Dorsolateral prefrontal cortex (tissue), 120 donors: ENCODE measurements at regions of chr6 and their contacts with region 1.

Region 1: GRCh38 chr6:34196126-34196830 is 40.4 kb upstream of the HMGA1 start:
- DNase-seq: peak; percentile 78 to 92 (median 85)
- H3K4me3 ChIP-seq: peak overlapping the region; percentile 47 to 85 (median 64)
- H3K27ac ChIP-seq: peak overlapping the region in 7 of 59 donors; percentile 4 to 75 (median 70)
- H3K27me3 ChIP-seq: no peaks in the 10 kb centered on the region
- CTCF ChIP-seq: peak; percentile 78 to 100 (median 97)

Region 2: GRCh38 chr6:34223956-34224940 is 28.0 kb after region 1 on chr6:
- intact Hi-C with region 1: loop called in 1 of 2 experiments (anchors 2 kb)
- DNase-seq: peak; percentile 81 to 95 (median 88)
- H3K4me3 ChIP-seq: peak overlapping the region; percentile 47 to 98 (median 72)
- H3K27ac ChIP-seq: peak overlapping the region; percentile 12 to 97 (median 93)
- H3K27me3 ChIP-seq: no peaks in the 10 kb centered on the region
- CTCF ChIP-seq: peak in 6 of 56 donors; percentile 5 to 35 (median 12)

Region 3: DNA sequence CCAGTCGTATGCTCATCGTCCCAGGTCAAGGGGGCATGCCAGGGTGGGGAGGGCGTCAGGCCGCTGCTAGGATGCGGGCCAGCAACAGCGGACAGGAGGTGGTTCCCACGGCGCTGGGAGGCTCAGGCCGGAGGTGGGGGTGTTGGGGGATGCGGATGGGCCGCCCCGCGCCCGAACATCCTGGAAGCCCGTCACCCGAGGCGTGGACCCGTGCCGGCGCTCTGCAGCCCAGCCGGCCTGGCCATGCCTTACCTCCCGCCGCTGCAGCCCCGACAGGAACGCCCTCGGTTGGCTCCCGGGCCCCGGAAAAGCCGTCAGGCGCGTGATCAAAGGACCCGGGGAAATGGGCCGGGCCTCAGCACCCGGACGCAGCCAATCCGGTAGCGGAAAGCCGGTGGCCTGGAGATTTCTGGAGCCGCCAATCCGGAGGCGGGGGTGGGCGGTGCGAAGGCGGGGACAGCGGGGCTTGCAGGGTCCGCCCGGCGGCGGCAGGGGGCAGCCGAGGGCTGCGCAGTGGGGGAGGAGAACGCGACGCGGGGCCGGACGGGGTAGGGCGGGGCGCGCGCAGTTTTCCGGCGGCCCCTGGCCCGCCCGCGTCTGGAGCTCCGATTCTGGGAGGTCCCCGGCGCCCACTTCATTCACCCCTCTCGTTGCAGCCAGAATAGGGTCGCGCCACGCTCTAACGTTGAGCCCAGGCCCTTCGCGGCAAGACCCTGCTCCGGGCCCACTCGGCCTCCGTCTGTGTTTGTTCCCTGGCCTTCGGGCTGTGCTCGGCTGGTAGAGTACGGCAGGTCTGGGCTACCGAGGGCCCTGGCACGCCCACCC is 52.7 kb after region 1 on chr6 and contains the start of gene SMIM29:
- intact Hi-C with region 1: loop called (anchors 1 to 2 kb)
- DNase-seq: peak; percentile 94 to 99 (median 97)
- H3K4me3 ChIP-seq: peak within 1 kb of the TSS; percentile 66 to 100 (median 93)
- H3K27ac ChIP-seq: peak within 1 kb of the TSS; percentile 75 to 99 (median 96)
- H3K27me3 ChIP-seq: no peaks in the 10 kb centered on the region
- CTCF ChIP-seq: peak; percentile 64 to 99 (median 94)
- total RNA-seq, gene SMIM29: 43.8 to 108 (median 67.5) TPM

Region 4: GRCh38 chr6:34324738-34325444 is 128.6 kb after region 1 on chr6:
- intact Hi-C with region 1: no loop called
- DNase-seq: peak in 1 of 10 donors; percentile 34
- H3K4me3 ChIP-seq: no peak overlapping the region
- H3K27ac ChIP-seq: peak overlapping the region in 28 of 59 donors; percentile 1 to 59 (median 28)
- H3K27me3 ChIP-seq: no peaks in the 10 kb centered on the region
- CTCF ChIP-seq: no peak

Region 5: DNA sequence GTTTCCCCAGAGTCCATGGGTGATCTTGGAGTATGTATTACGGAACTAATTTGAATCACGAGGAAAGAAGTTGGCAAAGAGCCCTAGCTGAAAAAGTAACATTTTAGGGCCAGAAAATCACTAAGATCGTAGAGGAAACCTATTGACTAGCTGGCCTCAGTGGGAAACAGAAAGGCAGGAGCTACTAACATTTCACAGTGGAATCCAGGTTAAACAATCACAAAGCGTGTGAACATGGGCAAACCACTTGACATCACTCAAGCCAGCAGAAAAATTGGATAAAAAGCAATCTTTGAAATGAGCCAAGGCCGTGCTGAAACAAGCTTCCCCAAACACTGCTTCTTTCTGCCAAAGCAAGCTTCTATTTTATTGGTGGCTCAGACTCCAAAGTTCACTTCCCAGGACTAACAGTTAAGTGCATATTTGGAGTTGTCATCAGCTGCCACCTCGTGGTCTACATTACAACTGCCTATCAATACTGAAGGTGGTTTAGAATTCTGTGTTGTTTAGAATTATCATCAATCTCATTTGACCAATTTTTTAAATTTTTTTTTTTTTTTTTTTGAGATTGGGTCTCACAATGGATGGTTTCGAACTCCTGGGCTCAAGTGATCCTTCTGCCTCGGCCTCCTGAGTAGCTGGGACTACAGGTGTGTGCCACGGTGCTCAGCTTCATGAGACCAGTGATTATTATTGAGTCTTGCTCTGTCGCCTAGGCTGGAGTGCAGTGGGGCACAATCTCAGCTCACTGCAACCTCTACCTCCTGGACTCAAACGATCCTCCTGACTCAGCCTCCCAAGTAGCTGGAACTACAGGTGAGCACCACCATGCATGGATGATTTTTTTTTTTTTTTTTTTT is 219.0 kb after region 1 on chr6:
- intact Hi-C with region 1: loop called (anchors 1 to 5 kb)
- DNase-seq: peak in 5 of 10 donors; percentile 39 to 75 (median 51)
- H3K4me3 ChIP-seq: peak overlapping the region in 7 of 59 donors; percentile 12 to 27 (median 19)
- H3K27ac ChIP-seq: peak overlapping the region in 58 of 59 donors; percentile 4 to 94 (median 80)
- H3K27me3 ChIP-seq: no peaks in the 10 kb centered on the region
- CTCF ChIP-seq: peak; percentile 58 to 89 (median 80)